ENCODE measurements at regions of chr19 and their contacts with region 1.

Region 1: GRCh38 chr19:2050991-2051772 is at the start of gene MKNK2:
- DNase-seq: peak; percentile 99
- ATAC-seq: peak; percentile 61
- H3K4me3 Mint-ChIP-seq: peak within 1 kb of the TSS; percentile 93
- H3K27ac Mint-ChIP-seq: peak within 1 kb of the TSS; percentile 97
- H3K4me1 Mint-ChIP-seq: peaks cover 77% of the 10 kb centered on the region
- H3K27me3 Mint-ChIP-seq: no peaks in the 10 kb centered on the region
- CTCF ChIP-seq: no peak
- total RNA-seq, gene MKNK2: 1,134 and 1,197 TPM in 2 replicates

Region 2: GRCh38 chr19:1875646-1876495 is 175.3 kb before region 1 on chr19:
- CTCF ChIA-PET with region 1: no interaction called
- POLR2A ChIA-PET with region 1: interaction called, 13 read pairs
- intact Hi-C with region 1: no loop called
- DNase-seq: peak; percentile 86
- ATAC-seq: peak; percentile 94
- H3K4me3 Mint-ChIP-seq: peak overlapping the region; percentile 97
- H3K27ac Mint-ChIP-seq: peak overlapping the region; percentile 92
- H3K4me1 Mint-ChIP-seq: peaks cover 34% of the 10 kb centered on the region
- H3K27me3 Mint-ChIP-seq: no peaks in the 10 kb centered on the region
- CTCF ChIP-seq: no peak

Region 3: DNA sequence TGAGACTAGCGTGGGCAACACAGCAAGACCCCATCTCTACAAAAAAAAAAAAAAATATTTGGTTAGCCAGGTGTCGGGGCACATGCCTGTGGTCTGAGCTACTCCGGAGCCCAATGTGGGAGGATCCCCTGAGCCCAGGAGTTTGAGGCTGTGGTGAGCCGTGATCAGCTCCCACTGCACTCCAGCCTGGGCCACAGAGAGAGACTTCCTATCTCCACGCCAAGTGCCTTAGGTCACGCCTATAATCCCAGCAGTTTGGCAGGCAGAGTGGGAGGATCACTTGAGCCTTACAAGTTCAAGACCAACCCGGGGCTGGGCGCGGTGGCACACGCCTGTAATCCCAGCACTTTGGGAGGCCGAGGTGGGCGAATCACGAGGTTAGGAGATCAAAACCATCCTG is 154.7 kb before region 1 on chr19:
- CTCF ChIA-PET with region 1: no interaction called
- POLR2A ChIA-PET with region 1: interaction called, 23 read pairs
- intact Hi-C with region 1: no loop called
- DNase-seq: no peak
- ATAC-seq: no peak
- H3K4me3 Mint-ChIP-seq: peak overlapping the region; percentile 84
- H3K27ac Mint-ChIP-seq: peak overlapping the region; percentile 97
- H3K4me1 Mint-ChIP-seq: peaks cover 45% of the 10 kb centered on the region
- H3K27me3 Mint-ChIP-seq: no peaks in the 10 kb centered on the region
- CTCF ChIP-seq: no peak

Region 4: GRCh38 chr19:1942078-1942933 is 108.9 kb before region 1 on chr19:
- CTCF ChIA-PET with region 1: no interaction called
- POLR2A ChIA-PET with region 1: interaction called, 7 read pairs
- intact Hi-C with region 1: loop called (anchors 1 kb)
- DNase-seq: peak; percentile 69
- ATAC-seq: peak; percentile 53
- H3K4me3 Mint-ChIP-seq: peak overlapping the region; percentile 91
- H3K27ac Mint-ChIP-seq: peak overlapping the region; percentile 96
- H3K4me1 Mint-ChIP-seq: peaks cover 46% of the 10 kb centered on the region
- H3K27me3 Mint-ChIP-seq: no peaks in the 10 kb centered on the region
- CTCF ChIP-seq: no peak

Region 5: GRCh38 chr19:2061495-2062381 is 10.6 kb after region 1 on chr19:
- CTCF ChIA-PET with region 1: interaction called, 6 read pairs
- POLR2A ChIA-PET with region 1: interaction called, 2,723 read pairs
- intact Hi-C with region 1: loop called (anchors 1 kb)
- DNase-seq: peak; percentile 100
- ATAC-seq: peak; percentile 90
- H3K4me3 Mint-ChIP-seq: peak overlapping the region; percentile 87
- H3K27ac Mint-ChIP-seq: peak overlapping the region; percentile 88
- H3K4me1 Mint-ChIP-seq: peaks cover 48% of the 10 kb centered on the region
- H3K27me3 Mint-ChIP-seq: no peaks in the 10 kb centered on the region
- CTCF ChIP-seq: no peak

Region 6: DNA sequence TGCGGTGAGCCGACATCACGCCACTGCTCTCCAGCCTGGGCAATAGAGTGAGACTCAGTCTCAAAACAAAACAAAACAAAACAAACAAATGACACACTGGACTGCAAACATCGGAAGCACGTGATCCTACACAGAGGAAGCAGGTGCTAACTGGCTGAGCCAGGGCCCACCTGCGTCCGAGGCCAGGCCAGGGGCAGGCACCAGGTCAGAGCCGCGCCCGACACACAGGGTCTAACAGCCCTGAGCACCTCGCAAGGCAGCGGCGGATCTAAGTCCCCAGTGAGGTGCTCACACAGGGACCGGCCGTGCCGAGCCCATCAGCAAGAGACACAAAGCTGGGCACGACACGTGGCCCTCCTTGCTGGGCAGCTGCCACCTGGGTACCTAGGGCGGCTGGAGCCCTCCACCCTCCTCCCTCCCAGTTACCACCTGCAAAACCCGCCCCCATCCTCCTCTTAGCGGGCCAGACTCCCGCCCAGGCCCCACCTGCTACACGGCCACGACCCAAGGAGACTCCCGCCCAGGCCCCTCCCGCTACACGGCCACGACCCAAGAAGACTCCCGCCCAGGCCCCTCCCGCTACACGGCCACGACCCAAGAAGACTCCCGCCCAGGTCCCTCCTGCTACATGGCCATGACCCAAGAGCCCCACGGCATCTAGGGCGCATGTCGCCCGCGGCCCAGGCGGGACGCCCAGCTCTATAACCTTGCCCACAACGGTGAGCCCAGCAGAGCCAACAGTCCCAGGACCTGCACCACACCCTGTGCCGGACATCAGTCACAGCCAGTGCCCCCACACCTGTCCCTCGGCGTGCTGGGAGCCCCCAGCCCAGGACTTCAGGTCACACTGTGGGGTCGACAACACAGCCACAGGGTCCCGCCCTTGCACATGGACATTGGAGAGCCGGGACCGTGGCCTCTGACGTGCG is 84.6 kb after region 1 on chr19:
- CTCF ChIA-PET with region 1: no interaction called
- POLR2A ChIA-PET with region 1: no interaction called
- intact Hi-C with region 1: no loop called
- DNase-seq: no peak
- ATAC-seq: no peak
- H3K4me3 Mint-ChIP-seq: no peak overlapping the region
- H3K27ac Mint-ChIP-seq: no peak overlapping the region
- H3K4me1 Mint-ChIP-seq: peaks cover 2% of the 10 kb centered on the region
- H3K27me3 Mint-ChIP-seq: no peaks in the 10 kb centered on the region
- CTCF ChIP-seq: no peak

Region 7: GRCh38 chr19:2231621-2232221 is 180.5 kb after region 1 on chr19:
- CTCF ChIA-PET with region 1: no interaction called
- POLR2A ChIA-PET with region 1: no interaction called
- intact Hi-C with region 1: no loop called
- DNase-seq: no peak
- ATAC-seq: no peak
- H3K4me3 Mint-ChIP-seq: no peak overlapping the region
- H3K27ac Mint-ChIP-seq: peak overlapping the region; percentile 63
- H3K4me1 Mint-ChIP-seq: peaks cover 38% of the 10 kb centered on the region
- H3K27me3 Mint-ChIP-seq: no peaks in the 10 kb centered on the region
- CTCF ChIP-seq: no peak

Measured in activated B cell treated with CpG ODN at 0.5 μM for 24 hours (primary cell).